ENCODE measurements at regions of chr1 and their contacts with region 1.

Region 1: GRCh38 chr1:228487336-228488124 is at the start of gene RNF187:
- DNase-seq: peak; percentile 96
- H3K4me3 Mint-ChIP-seq: peak within 1 kb of the TSS; percentile 98
- H3K27ac Mint-ChIP-seq: peak within 1 kb of the TSS; percentile 100
- H3K4me1 Mint-ChIP-seq: peaks cover 14% of the 10 kb centered on the region
- H3K27me3 Mint-ChIP-seq: no peaks in the 10 kb centered on the region
- CTCF ChIP-seq: no peak
- total RNA-seq, gene RNF187: 87.1 and 99.2 TPM in 2 replicates

Region 2: DNA sequence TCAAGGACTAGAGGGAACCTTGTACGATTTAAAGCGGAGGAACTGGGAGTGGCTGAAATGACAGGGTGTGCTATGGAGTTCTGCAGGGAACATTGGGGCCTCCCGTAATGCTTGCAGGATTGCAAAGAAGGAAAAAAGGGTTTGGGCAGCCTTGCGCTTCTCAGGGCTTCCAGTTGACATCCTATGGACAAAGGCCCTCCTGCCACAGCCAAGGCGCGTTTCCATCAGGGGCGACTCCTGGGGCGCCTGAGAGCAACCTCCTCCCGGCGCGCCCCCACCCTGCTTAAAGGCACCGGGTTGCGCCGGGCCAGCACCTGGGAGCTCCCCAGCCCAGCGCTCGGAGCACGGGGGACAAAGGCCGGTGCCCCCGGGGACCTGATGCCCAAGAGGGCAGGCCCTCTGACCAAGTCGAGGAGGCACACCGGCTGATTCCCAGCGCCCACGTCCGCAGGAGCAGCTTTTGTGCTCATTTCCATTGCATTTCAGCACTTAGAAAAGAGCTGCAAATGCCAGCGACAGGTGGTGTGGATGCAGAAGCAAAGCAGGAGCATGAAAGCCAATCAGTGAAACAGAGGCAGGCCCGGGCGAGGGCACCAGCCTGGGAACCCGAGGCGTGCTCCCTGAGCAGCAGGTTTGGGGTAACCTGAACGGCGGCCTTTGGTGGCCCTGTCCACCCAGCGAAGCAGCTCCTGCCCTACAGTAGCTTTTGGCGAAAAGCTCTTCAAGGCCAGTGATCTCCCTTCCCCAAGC is 17.9 kb before region 1 on chr1:
- CTCF ChIA-PET with region 1: no interaction called
- intact Hi-C with region 1: no loop called
- DNase-seq: no peak
- H3K4me3 Mint-ChIP-seq: no peak overlapping the region
- H3K27ac Mint-ChIP-seq: no peak overlapping the region
- H3K4me1 Mint-ChIP-seq: no peaks in the 10 kb centered on the region
- H3K27me3 Mint-ChIP-seq: peaks cover 47% of the 10 kb centered on the region
- CTCF ChIP-seq: no peak

Region 3: DNA sequence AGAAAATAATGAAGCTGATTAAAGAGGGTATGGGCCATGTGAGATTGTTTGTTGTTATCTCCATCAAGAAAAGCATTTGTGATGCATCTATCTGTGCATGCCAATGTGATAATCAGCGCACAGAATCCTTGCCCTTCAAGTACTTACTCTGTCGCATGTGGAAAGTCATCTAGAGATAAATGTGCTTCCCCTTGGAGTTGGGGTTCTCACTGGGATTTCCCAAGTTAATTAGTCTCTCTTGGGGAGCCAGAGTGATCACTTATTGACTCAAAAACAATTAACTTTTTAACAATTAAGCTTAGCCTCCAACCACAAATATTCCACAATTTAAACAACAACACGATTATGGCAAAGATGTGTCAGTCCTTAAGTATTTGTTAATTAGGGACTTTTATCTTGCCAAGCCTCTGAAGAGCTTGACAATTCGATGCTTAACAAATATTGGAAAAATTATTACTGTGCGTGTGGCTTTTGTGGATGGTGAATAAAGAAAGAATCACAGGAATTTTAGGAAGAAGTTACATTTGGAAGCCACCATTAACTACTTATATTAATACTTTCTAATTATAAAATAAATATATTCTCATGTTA is 265.2 kb after region 1 on chr1:
- CTCF ChIA-PET with region 1: interaction called, 15 read pairs
- intact Hi-C with region 1: no loop called
- DNase-seq: no peak
- H3K4me3 Mint-ChIP-seq: no peak overlapping the region
- H3K27ac Mint-ChIP-seq: no peak overlapping the region
- H3K4me1 Mint-ChIP-seq: no peaks in the 10 kb centered on the region
- H3K27me3 Mint-ChIP-seq: peaks cover 28% of the 10 kb centered on the region
- CTCF ChIP-seq: no peak

Region 4: GRCh38 chr1:228989992-228990827 is 502.7 kb after region 1 on chr1:
- CTCF ChIA-PET with region 1: no interaction called
- intact Hi-C with region 1: no loop called
- DNase-seq: no peak
- H3K4me3 Mint-ChIP-seq: no peak overlapping the region
- H3K27ac Mint-ChIP-seq: no peak overlapping the region
- H3K4me1 Mint-ChIP-seq: no peaks in the 10 kb centered on the region
- H3K27me3 Mint-ChIP-seq: no peaks in the 10 kb centered on the region
- CTCF ChIP-seq: no peak